Endothelial cell of umbilical vein (primary cell): ENCODE measurements at regions of chr4 and their contacts with region 1.

Region 1: GRCh38 chr4:87838890-87839591 is 6.3 kb downstream of the MEPE start:
- DNase-seq: peak; percentile 38
- H3K4me3 ChIP-seq: no peak overlapping the region
- H3K27ac ChIP-seq: no peak overlapping the region
- H3K4me1 ChIP-seq: peaks cover 4% of the 10 kb centered on the region
- H3K27me3 ChIP-seq: peaks cover 3 to 7% of the 10 kb centered on the region in 2 experiments
- CTCF ChIP-seq: peak; percentile 24 to 53
- POLR2A ChIP-seq: no peak

Region 2: GRCh38 chr4:87270144-87270543 is 568.9 kb before region 1 on chr4:
- CTCF ChIA-PET with region 1: interaction called, 10 read pairs
- POLR2A ChIA-PET with region 1: no interaction called
- dilution Hi-C with region 1: no loop called
- intact Hi-C with region 1: no loop called
- DNase-seq: peak; percentile 31
- H3K4me3 ChIP-seq: no peak overlapping the region
- H3K27ac ChIP-seq: no peak overlapping the region
- H3K4me1 ChIP-seq: no peaks in the 10 kb centered on the region
- H3K27me3 ChIP-seq: peaks cover 7 to 12% of the 10 kb centered on the region in 2 experiments
- CTCF ChIP-seq: peak; percentile 8 to 32
- POLR2A ChIP-seq: no peak

Region 3: GRCh38 chr4:87353592-87353991 is 485.4 kb before region 1 on chr4:
- CTCF ChIA-PET with region 1: interaction called, 22 read pairs
- POLR2A ChIA-PET with region 1: no interaction called
- dilution Hi-C with region 1: no loop called
- intact Hi-C with region 1: loop called (anchors 5 kb)
- DNase-seq: peak; percentile 67
- H3K4me3 ChIP-seq: no peak overlapping the region
- H3K27ac ChIP-seq: no peak overlapping the region
- H3K4me1 ChIP-seq: no peaks in the 10 kb centered on the region
- H3K27me3 ChIP-seq: no peaks in the 10 kb centered on the region
- CTCF ChIP-seq: peak; percentile 57
- POLR2A ChIP-seq: no peak

Region 4: GRCh38 chr4:87543835-87544461 is 295.1 kb before region 1 on chr4:
- CTCF ChIA-PET with region 1: interaction called, 130 read pairs
- POLR2A ChIA-PET with region 1: no interaction called
- dilution Hi-C with region 1: no loop called
- intact Hi-C with region 1: loop called (anchors 1 kb)
- DNase-seq: peak; percentile 48
- H3K4me3 ChIP-seq: no peak overlapping the region
- H3K27ac ChIP-seq: no peak overlapping the region
- H3K4me1 ChIP-seq: no peaks in the 10 kb centered on the region
- H3K27me3 ChIP-seq: peaks cover 0 to 3% of the 10 kb centered on the region in 2 experiments
- CTCF ChIP-seq: peak; percentile 29 to 47
- POLR2A ChIP-seq: no peak

Region 5: GRCh38 chr4:87559109-87559837 is 279.8 kb before region 1 on chr4:
- CTCF ChIA-PET with region 1: no interaction called
- POLR2A ChIA-PET with region 1: no interaction called
- dilution Hi-C with region 1: no loop called
- intact Hi-C with region 1: no loop called
- DNase-seq: no peak
- H3K4me3 ChIP-seq: no peak overlapping the region
- H3K27ac ChIP-seq: no peak overlapping the region
- H3K4me1 ChIP-seq: no peaks in the 10 kb centered on the region
- H3K27me3 ChIP-seq: no peaks in the 10 kb centered on the region
- CTCF ChIP-seq: no peak
- POLR2A ChIP-seq: no peak

Region 6: DNA sequence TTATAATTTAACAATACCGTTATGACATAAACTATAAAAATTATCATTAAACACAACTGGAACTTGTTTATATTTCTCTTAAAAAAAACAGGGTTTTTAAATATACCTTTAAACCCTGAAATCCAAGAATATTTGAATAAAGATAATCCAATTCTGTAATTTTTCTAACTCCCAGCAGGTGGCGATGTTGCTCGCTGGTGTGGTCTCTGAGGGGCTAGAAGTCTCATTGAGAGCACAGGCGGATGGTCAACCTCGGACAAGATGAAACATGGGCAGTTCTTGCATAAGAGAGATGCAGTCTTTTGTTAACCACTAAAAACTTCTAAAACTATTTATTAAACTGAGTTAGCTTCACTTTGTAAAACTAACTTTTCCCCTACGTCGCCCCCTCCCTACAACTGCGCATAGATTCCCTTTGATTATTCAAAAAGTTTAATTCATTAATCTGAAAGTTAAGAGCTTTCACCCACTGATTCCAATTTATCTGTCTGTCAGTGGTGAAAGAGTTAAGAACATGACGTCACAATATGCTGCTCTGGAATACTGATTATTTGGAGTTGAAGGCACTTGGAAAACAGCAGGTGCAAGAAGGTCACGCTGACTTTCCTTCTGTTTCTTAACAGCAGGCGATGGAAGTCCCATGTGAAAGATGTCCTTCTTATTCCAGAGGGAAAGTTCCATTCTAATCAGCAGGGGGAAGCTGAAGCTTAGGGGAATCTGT is 159.4 kb before region 1 on chr4:
- CTCF ChIA-PET with region 1: interaction called, 26 read pairs
- POLR2A ChIA-PET with region 1: no interaction called
- dilution Hi-C with region 1: no loop called
- intact Hi-C with region 1: loop called (anchors 1 kb)
- DNase-seq: peak; percentile 52
- H3K4me3 ChIP-seq: no peak overlapping the region
- H3K27ac ChIP-seq: no peak overlapping the region
- H3K4me1 ChIP-seq: no peaks in the 10 kb centered on the region
- H3K27me3 ChIP-seq: no peaks in the 10 kb centered on the region
- CTCF ChIP-seq: peak; percentile 61 to 76
- POLR2A ChIP-seq: no peak

Region 7: GRCh38 chr4:87749883-87750282 is 89.2 kb before region 1 on chr4:
- CTCF ChIA-PET with region 1: no interaction called
- POLR2A ChIA-PET with region 1: no interaction called
- dilution Hi-C with region 1: no loop called
- intact Hi-C with region 1: no loop called
- DNase-seq: no peak
- H3K4me3 ChIP-seq: no peak overlapping the region
- H3K27ac ChIP-seq: no peak overlapping the region
- H3K4me1 ChIP-seq: no peaks in the 10 kb centered on the region
- H3K27me3 ChIP-seq: no peaks in the 10 kb centered on the region
- CTCF ChIP-seq: no peak
- POLR2A ChIP-seq: no peak

Region 8: DNA sequence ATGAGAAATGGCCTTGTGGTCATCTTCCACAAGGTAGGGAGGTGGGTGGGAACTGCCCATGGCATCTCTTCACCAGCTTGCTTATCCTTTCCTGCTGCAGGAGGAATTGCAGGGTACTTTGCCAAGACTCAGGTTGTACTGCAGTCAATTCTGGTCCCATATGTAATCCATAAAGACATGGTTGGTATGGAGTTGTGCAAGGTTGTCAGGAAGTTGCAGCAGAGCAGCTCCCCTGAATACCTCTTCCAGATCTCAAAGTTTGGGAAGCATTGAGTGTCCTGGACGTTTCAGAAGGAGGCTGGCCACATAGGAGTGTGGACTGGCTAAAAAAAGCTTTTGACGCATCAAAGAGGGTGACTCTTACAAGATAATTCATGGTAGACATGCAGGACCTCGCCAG is 16.3 kb before region 1 on chr4:
- CTCF ChIA-PET with region 1: interaction called, 10 read pairs
- POLR2A ChIA-PET with region 1: no interaction called
- dilution Hi-C with region 1: no loop called
- intact Hi-C with region 1: no loop called
- DNase-seq: no peak
- H3K4me3 ChIP-seq: no peak overlapping the region
- H3K27ac ChIP-seq: no peak overlapping the region
- H3K4me1 ChIP-seq: no peaks in the 10 kb centered on the region
- H3K27me3 ChIP-seq: peaks cover 0 to 4% of the 10 kb centered on the region in 2 experiments
- CTCF ChIP-seq: no peak
- POLR2A ChIP-seq: no peak

Region 9: GRCh38 chr4:88366460-88366859 is 527.4 kb after region 1 on chr4:
- CTCF ChIA-PET with region 1: no interaction called
- POLR2A ChIA-PET with region 1: no interaction called
- dilution Hi-C with region 1: no loop called
- intact Hi-C with region 1: no loop called
- DNase-seq: no peak
- H3K4me3 ChIP-seq: no peak overlapping the region
- H3K27ac ChIP-seq: no peak overlapping the region
- H3K4me1 ChIP-seq: no peaks in the 10 kb centered on the region
- H3K27me3 ChIP-seq: peaks cover 0 to 2% of the 10 kb centered on the region in 2 experiments
- CTCF ChIP-seq: no peak
- POLR2A ChIP-seq: no peak